K562 (cell line): ENCODE measurements at regions of chr1 and their contacts with region 1.

Region 1: GRCh38 chr1:230917284-230918135 is 49.2 kb upstream of the C1orf198 start:
- DNase-seq: peak; percentile 72 to 94 (median 74)
- ATAC-seq: peak; percentile 95
- H3K4me3 ChIP-seq: no peak overlapping the region
- H3K27ac ChIP-seq: no peak overlapping the region
- H3K4me1 ChIP-seq: peaks cover 0 to 9% of the 10 kb centered on the region in 2 experiments; a peak in 3 of 5 replicates
- H3K27me3 ChIP-seq: no peaks in the 10 kb centered on the region
- CTCF ChIP-seq: peak; percentile 76 to 92 (median 84)
- EP300 ChIP-seq: no peak
- POLR2A ChIP-seq: no peak
- RAD21 ChIP-seq: peak; percentile 86 to 90

Region 2: DNA sequence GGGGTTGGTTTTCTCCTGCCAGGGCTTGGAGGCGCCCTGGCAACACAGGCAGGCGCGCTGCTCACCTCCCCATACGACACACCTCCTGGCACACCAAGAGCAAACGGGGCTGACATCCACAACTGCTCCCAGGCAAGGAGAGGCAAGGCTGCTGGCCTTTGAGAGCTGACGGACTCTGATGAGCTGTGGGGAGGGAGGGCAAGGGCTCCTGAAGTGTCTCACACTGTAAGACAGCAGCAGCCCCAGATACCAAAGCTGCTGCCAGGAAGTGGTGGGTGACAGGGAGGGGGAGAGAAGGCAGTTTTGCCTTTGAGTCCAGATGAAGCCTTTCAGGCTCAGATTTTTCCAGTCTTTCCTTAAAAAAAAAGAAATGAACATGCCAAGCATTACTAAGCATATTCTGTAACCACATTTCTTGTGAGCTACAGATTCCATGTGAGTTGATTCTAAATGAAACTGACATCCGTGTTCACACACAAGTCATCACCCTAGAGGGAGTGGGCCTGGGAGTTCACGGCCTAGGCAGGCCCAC is 515.7 kb before region 1 on chr1:
- CTCF ChIA-PET with region 1: no interaction called
- POLR2A ChIA-PET with region 1: no interaction called
- in situ Hi-C with region 1: no loop called
- intact Hi-C with region 1: no loop called
- DNase-seq: no peak
- ATAC-seq: no peak
- H3K4me3 ChIP-seq: no peak overlapping the region
- H3K27ac ChIP-seq: no peak overlapping the region
- H3K4me1 ChIP-seq: 0 out of 5 replicates have a peak, but pooled peaks cover 0 to 3% of the 10 kb centered on the region in 2 experiments
- H3K27me3 ChIP-seq: peaks cover 22 to 49% of the 10 kb centered on the region in 2 experiments
- CTCF ChIP-seq: no peak
- EP300 ChIP-seq: no peak
- POLR2A ChIP-seq: no peak
- RAD21 ChIP-seq: no peak

Region 3: DNA sequence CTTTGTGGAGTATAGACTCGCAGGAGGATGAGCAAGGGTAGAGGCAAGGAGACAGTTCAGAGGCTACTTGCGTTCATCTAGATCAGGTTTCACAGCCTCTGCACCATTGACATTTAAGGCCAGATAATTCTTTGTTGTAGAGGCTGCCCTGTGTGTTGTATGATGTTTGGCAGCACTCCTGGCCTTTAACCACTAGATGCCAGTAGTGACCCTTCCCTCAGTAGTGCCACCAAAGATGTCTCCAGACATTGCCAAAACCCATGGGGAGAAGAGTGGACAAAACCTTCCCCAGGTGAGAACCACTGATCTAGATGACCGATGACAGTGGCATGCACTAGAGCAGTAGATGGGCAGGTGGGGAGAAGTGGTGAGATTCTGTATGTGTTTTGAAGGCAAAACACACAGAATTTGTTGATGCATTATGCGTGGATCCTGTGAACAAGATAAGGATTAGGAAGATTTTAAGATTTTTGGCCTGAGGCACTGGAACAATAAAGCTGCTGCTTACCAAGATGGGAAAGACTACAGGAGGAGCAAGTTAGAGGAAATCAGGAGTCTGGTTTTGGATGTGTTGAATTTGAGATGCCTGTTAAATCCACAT is 285.1 kb before region 1 on chr1:
- CTCF ChIA-PET with region 1: no interaction called
- POLR2A ChIA-PET with region 1: no interaction called
- in situ Hi-C with region 1: no loop called
- intact Hi-C with region 1: loop called (anchors 5 kb)
- DNase-seq: peak in 2 of 4 experiments; percentile 24 to 47
- ATAC-seq: peak; percentile 91
- H3K4me3 ChIP-seq: no peak overlapping the region
- H3K27ac ChIP-seq: no peak overlapping the region
- H3K4me1 ChIP-seq: no peaks in the 10 kb centered on the region
- H3K27me3 ChIP-seq: peaks cover 4 to 12% of the 10 kb centered on the region in 2 experiments; a peak in 3 of 5 replicates
- CTCF ChIP-seq: peak; percentile 62 to 78 (median 70)
- EP300 ChIP-seq: no peak
- POLR2A ChIP-seq: no peak
- RAD21 ChIP-seq: peak; percentile 60 to 77

Region 4: DNA sequence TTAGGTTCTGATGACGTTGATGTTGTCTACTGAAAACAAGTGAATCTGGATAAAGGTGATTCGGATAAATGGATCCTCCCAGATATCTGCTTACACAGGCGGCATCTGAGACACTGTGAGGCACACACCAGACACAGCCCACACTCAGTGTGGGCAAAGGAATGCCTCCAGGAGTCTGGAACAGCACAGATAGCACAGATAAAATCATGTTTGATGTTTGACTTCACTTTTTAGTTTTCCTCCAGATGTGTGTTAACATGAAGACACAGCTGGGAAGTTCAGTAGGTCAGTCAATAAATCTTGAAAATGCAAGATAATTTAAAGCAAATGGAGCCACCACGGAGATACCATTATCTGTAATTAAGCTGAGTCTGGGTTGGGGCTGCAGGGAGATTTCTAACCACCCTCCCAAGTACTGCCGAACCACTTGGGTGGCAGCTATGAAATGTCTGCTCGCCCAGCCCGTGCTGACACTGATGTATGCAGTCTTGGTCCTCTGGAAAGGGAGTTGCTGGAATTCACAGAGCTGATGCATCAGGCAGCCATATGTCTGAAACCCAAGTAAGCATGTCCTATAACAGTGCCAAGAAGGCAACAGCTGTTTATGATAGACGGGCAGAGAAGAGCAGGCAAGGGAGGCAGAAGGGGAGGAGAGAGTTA is 158.7 kb before region 1 on chr1:
- CTCF ChIA-PET with region 1: no interaction called
- POLR2A ChIA-PET with region 1: no interaction called
- in situ Hi-C with region 1: no loop called
- intact Hi-C with region 1: no loop called
- DNase-seq: no peak
- ATAC-seq: no peak
- H3K4me3 ChIP-seq: no peak overlapping the region
- H3K27ac ChIP-seq: no peak overlapping the region
- H3K4me1 ChIP-seq: no peaks in the 10 kb centered on the region; a peak in 1 of 5 replicates
- H3K27me3 ChIP-seq: peaks cover 43 to 79% of the 10 kb centered on the region in 2 experiments
- CTCF ChIP-seq: no peak
- EP300 ChIP-seq: no peak
- POLR2A ChIP-seq: no peak
- RAD21 ChIP-seq: no peak

Region 5: DNA sequence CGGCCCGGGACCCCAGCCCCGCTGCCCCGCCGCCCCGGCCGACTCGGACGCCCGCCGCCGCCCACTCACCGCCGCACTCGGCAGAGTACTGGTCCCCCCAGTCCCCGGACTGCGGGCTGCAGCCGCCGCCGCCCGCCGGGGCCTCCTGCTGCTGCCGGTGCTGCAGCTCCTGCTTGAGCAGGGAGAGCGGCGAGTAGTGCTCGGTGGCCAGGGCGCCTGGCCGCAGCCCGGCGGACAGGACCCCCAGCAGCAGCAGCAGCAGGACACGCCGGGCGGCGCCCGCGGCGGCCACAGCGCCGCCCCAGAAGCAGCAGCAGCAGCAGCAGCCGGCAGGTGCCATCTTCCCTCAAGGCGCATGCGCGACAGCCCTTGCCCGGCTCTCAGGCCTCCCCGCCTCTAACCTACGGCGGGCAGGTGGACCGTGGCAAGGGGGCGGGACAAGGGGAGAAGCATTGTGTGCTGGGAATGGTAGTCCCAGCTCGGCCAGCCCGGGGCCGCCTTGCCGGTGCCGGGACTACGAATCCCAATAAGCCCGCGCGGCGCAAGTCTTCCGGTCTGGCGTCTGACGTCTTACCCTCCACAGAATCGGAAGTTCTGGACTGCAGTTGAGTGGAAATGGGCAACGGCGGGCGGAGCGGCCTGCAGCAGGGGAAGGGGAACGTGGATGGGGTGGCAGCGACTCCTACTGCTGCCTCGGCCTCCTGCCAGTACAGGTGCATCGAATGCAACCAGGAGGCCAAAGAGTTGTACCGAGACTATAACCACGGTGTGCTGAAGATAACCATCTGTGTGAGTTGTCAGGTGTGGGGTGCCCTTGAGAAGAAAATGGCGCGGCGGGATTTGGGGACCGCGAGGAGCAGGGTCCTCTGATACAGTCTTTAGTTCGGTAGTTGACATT is 61.2 kb after region 1 on chr1 and contains the starts of genes ARV1 and TTC13:
- CTCF ChIA-PET with region 1: no interaction called
- POLR2A ChIA-PET with region 1: no interaction called
- in situ Hi-C with region 1: no loop called
- intact Hi-C with region 1: loop called (anchors 2 kb)
- DNase-seq: peak; percentile 99 to 100 (median 99)
- ATAC-seq: peak; percentile 99
- H3K4me3 ChIP-seq: peak within 1 kb of the TSS; percentile 62
- H3K27ac ChIP-seq: peak within 1 kb of the TSS; percentile 75
- H3K4me1 ChIP-seq: peaks cover 21 to 40% of the 10 kb centered on the region in 2 experiments; a peak in 4 of 5 replicates
- H3K27me3 ChIP-seq: no peaks in the 10 kb centered on the region
- CTCF ChIP-seq: peak; percentile 38 to 53 (median 52); a peak in 5 of 6 replicates
- EP300 ChIP-seq: peak; percentile 33; the same call in 1 of the 2 replicates
- POLR2A ChIP-seq: peak; percentile 97
- RAD21 ChIP-seq: peak; percentile 21 to 41; a peak in 3 of 4 replicates
- polyA plus RNA-seq, gene ARV1: 61.9 to 71.0 TPM
- polyA plus RNA-seq, gene TTC13: 1.7 to 2.2 TPM

Region 6: GRCh38 chr1:231091831-231092301 is 174.4 kb after region 1 on chr1:
- CTCF ChIA-PET with region 1: interaction called, 15 read pairs
- POLR2A ChIA-PET with region 1: interaction called, 3 read pairs
- in situ Hi-C with region 1: no loop called
- intact Hi-C with region 1: loop called (anchors 1 kb)
- DNase-seq: peak; percentile 67 to 89 (median 72)
- ATAC-seq: peak; percentile 97
- H3K4me3 ChIP-seq: no peak overlapping the region
- H3K27ac ChIP-seq: no peak overlapping the region
- H3K4me1 ChIP-seq: peaks cover 0 to 5% of the 10 kb centered on the region in 2 experiments; a peak in 4 of 5 replicates
- H3K27me3 ChIP-seq: peaks cover 11 to 18% of the 10 kb centered on the region in 2 experiments; a peak in 4 of 5 replicates
- CTCF ChIP-seq: peak; percentile 94 to 99 (median 97)
- EP300 ChIP-seq: no peak
- POLR2A ChIP-seq: no peak
- RAD21 ChIP-seq: peak; percentile 89 to 97

Region 7: DNA sequence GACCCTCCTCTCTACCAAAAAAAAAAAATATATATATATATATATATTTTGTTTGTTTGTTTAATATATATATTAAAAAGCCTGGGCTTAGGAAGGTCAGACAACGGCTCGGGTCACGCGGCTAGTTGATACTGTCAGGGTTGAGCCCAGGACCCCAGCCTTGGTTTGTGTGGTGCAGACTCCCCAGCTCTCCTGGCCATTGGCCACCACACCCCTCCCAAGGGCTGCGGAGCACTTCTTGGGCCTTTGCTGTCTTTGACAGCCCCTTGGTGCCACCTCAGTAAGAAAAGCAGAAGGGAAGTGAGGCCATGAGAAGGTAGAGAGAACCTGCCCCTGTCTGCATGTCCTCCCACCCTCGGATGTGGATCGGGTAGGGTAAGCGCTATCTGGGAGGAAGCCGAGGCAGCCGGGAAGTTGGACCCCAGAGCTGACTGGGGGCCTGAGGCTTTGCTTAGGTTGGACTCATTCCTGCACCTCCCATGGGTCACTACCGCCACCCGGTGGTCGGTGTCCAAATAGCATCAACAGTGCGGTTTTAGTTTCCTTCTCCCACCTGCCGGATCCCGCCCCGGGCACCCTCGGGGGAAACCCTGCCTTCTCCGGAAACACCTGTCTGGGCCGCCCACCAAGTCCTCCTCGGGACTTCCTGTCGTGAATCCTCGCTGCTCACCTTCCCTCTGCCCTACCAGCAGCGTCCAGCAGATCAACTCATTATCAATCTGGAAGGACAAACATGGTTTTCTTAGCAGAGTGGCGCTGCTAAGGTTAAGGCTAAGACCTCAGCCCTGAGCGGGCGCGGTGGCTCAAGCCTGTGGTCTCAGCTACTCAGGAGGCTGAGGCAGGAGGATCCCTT is 293.7 kb after region 1 on chr1:
- CTCF ChIA-PET with region 1: interaction called, 11 read pairs
- POLR2A ChIA-PET with region 1: no interaction called
- in situ Hi-C with region 1: loop called (anchors 5 kb)
- intact Hi-C with region 1: loop called (anchors 1 kb)
- DNase-seq: peak; percentile 86 to 92 (median 90)
- ATAC-seq: peak; percentile 93
- H3K4me3 ChIP-seq: peak overlapping the region; percentile 32
- H3K27ac ChIP-seq: no peak overlapping the region
- H3K4me1 ChIP-seq: peaks cover 0 to 17% of the 10 kb centered on the region in 2 experiments; a peak in 3 of 5 replicates
- H3K27me3 ChIP-seq: peaks cover 10 to 18% of the 10 kb centered on the region in 2 experiments; a peak in 3 of 5 replicates
- CTCF ChIP-seq: peak; percentile 94 to 98 (median 98)
- EP300 ChIP-seq: no peak
- POLR2A ChIP-seq: no peak
- RAD21 ChIP-seq: peak; percentile 99

Region 8: DNA sequence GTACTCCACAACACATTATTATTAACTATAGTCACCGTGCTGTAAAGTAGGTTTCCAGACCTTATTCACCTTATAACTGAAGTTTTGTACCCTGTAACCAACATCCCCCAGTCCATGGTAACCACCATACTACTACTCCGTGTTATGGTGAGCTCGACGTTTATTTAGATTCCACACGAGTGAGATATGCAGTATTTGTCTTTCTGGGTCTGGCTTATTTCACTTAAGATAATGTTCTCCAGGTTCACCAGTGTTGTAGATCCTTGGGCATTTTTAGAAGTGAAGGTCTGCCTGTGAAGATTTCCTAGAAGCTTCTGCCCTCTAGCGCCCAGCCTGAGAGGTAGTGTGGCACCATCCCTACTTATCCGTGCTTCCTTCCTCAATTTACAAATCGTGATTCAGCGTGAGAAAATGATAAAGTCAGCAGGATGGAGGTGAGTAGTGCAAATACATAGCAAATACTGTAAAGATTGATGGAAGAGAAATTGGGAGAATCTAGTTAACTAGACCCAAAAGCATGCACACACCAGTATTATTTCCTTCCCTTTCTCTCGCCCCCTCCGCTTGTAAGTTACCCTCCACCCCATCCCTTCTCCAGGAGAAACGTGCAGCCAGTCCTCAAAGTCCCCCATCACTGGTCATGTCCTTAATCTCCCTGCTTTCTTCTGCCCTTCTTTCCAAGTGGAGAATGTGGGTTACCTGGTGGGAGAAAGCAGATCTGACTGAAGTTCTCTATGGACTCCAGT is 673.1 kb after region 1 on chr1:
- CTCF ChIA-PET with region 1: no interaction called
- POLR2A ChIA-PET with region 1: no interaction called
- in situ Hi-C with region 1: no loop called
- intact Hi-C with region 1: loop called (anchors 10 kb)
- DNase-seq: peak in 2 of 4 experiments; percentile 49 to 70
- ATAC-seq: peak; percentile 95
- H3K4me3 ChIP-seq: no peak overlapping the region
- H3K27ac ChIP-seq: no peak overlapping the region
- H3K4me1 ChIP-seq: no peaks in the 10 kb centered on the region; a peak in 1 of 5 replicates
- H3K27me3 ChIP-seq: no peaks in the 10 kb centered on the region
- CTCF ChIP-seq: peak; percentile 67 to 88 (median 81)
- EP300 ChIP-seq: no peak
- POLR2A ChIP-seq: no peak
- RAD21 ChIP-seq: peak; percentile 68 to 88

Region 9: GRCh38 chr1:231903586-231904081 is 986.1 kb after region 1 on chr1:
- CTCF ChIA-PET with region 1: no interaction called
- POLR2A ChIA-PET with region 1: no interaction called
- in situ Hi-C with region 1: no loop called
- intact Hi-C with region 1: no loop called
- DNase-seq: no peak
- ATAC-seq: no peak
- H3K4me3 ChIP-seq: no peak overlapping the region
- H3K27ac ChIP-seq: no peak overlapping the region
- H3K4me1 ChIP-seq: no peaks in the 10 kb centered on the region
- H3K27me3 ChIP-seq: no peaks in the 10 kb centered on the region
- CTCF ChIP-seq: no peak
- EP300 ChIP-seq: no peak
- POLR2A ChIP-seq: no peak
- RAD21 ChIP-seq: no peak